Cardiac septum (tissue), 1 donor: ENCODE measurements at regions of chr5 and their contacts with region 1.

Region 1: DNA sequence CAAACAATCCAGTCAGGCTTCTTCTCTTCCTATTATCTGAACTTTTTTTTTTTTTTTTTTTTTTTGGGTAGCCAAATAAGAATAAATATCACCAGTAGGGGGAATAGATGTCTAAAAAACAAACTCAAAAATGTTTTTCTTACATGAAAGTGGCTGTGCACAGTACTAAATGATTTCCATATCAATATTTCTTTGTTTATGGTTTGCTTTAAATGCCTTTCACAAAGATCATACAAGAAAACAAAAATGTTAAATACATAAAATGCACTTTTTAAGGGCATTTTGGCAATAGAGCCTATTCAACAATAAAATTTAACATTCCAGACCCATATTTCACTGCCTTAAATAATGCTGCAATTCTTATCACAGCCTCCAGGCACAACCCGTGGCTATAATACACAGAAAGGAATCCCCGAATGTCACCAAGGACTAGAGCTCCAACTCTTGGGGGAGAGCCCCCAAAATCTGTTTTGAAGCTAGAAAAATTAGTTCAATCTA is 91.1 kb upstream of the TBCA start:
- DNase-seq: no peak

Region 2: DNA sequence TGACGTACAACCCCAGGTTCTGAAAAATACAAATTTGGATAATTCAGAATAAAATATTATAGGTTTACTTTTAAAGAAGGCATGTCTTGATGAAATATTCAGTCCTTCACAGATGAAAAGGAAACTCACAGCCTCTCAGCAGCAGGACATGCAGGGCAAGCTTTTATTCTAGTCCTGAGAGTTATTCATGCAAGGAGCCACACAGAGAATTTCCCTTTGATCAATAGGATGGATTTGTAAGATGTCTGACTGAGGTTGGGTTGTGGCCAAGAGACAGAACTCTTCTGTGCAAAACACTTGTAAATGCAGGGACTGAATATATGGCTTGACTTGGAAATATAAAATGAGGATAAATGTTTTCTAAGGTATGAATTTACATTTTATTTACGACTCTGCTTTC is 42.3 kb before region 1 on chr5:
- intact Hi-C with region 1: no loop called
- DNase-seq: no peak

Region 3: GRCh38 chr5:78269088-78269703 is 402.0 kb after region 1 on chr5:
- intact Hi-C with region 1: loop called (anchors 10 kb)
- DNase-seq: no peak